ENCODE measurements at regions of chr1 and their contacts with region 1.

Region 1: GRCh38 chr1:65958561-65959350 is 166.1 kb downstream of the PDE4B start:
- DNase-seq: no peak
- ATAC-seq: peak in 3 of 8 donors; percentile 29 to 46 (median 45)
- H3K4me3 ChIP-seq: no peak overlapping the region
- H3K27ac ChIP-seq: no peak overlapping the region
- H3K4me1 ChIP-seq: peaks cover 0 to 8% (median 0%) of the 10 kb centered on the region in 9 donors
- H3K27me3 ChIP-seq: peaks cover 0 to 5% (median 0%) of the 10 kb centered on the region in 7 donors
- CTCF ChIP-seq: peak; percentile 62 to 89 (median 72)

Region 2: DNA sequence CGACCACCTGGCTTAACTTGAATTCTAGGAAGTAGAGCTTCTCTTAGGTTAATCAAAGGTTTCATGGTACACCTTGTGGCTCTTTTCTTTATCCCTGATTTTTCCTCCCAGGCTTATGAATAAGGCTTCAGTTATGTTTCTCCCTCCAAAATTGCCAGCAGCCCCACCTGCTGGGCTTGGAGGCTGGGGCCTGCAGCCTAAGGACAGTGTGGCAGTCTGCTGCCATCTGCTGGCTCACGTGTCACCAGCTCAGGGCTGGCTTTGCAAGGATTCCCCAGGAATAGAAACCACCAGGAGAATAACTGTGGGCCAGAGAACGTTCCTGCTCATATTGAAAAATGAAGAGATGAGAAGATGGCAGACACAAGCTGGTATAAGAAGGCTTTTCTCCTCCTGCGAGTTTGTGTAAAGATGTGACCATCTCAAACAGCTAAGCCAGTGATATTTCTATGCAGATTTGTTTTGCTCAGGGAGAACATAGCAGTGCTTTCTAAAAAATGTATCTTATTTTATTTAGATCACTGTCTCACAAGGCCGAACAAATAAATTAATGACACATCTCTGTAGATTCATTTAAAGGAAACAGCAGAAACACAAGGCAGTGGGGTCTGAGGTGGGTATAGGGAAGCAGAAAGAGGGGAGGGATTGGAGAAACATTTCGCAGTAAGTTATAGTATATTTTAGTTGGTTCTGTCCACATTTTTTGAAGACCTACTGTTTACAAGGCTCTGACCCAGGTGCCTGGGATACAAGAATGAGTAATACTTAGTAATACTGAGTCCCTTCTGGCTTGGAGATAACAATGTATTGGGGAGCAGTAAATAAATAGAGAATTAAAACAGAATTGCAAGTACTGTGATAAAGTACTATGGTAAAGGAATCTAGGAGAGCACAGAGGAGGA is 284.1 kb after region 1 on chr1:
- intact Hi-C with region 1: loop called (anchors 1 to 5 kb)
- DNase-seq: peak; percentile 77 to 78
- ATAC-seq: peak; percentile 92 to 99 (median 96)
- H3K4me3 ChIP-seq: no peak overlapping the region
- H3K27ac ChIP-seq: no peak overlapping the region
- H3K4me1 ChIP-seq: peaks cover 0 to 14% (median 0%) of the 10 kb centered on the region in 9 donors
- H3K27me3 ChIP-seq: peaks cover 0 to 4% (median 0%) of the 10 kb centered on the region in 7 donors
- CTCF ChIP-seq: peak; percentile 91 to 100 (median 97)

Region 3: DNA sequence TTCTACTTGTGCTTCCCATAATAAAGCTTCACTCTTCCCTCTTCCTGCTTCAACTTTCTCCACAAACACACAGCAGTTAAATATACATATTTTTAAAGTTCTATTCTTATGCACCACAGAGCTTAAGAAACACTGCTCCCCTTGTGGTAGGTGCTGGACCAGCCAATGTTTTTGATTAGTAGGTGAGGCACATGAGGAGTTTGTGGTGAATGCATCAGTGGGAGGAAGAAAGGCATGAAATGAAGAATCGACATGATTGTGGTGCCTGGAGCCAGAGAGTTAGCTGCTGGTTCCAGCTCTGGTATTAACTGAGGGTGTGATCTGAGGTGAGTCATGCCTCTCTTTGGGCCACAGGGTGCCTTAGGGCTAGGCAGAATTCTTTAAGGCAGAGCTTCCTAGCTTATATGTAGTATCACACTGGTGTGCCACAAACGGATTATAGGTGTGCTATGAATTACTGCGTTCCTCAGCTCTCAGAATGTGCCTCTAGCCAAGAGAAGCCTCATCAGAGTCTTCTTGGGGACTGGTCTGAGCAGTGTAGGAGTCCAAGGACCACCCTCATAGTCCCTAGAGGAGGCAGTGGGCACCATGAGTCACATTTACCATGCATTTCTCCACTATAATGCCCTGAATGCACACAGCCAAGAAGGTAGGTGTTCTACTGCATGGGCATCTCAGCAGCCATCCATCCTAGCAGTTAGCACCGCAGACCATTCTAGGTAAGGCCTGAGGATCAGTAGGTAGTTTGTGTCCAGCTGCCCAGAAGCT is 477.8 kb after region 1 on chr1:
- intact Hi-C with region 1: loop called in 1 of 10 experiments (anchors 5 kb)
- DNase-seq: no peak
- ATAC-seq: no peak
- H3K4me3 ChIP-seq: no peak overlapping the region
- H3K27ac ChIP-seq: no peak overlapping the region
- H3K4me1 ChIP-seq: peaks cover 0 to 28% (median 0%) of the 10 kb centered on the region in 9 donors
- H3K27me3 ChIP-seq: no peaks in the 10 kb centered on the region
- CTCF ChIP-seq: peak in 6 of 9 donors; percentile 13 to 35 (median 22)

Region 4: DNA sequence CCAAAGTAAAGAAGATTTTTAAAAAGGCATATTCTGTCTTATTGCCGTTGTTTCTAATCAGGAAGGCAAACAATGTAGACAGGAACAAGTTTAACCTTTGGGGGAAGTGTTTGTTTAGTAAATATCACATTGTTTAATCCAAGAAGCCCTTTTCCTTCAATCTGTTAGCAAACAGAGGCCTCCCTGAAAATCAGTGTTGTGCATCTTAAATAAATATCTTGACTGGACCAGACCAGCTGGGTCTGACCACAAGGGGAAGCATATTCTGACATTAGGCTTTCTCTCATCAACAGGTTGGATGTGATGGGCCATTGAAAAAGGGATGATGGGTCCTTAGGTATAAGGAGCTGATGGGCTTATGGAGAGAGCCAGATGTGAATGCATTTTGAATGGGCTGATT is 493.4 kb after region 1 on chr1:
- intact Hi-C with region 1: loop called in 8 of 10 experiments (anchors 2 to 5 kb)
- DNase-seq: no peak
- ATAC-seq: no peak
- H3K4me3 ChIP-seq: no peak overlapping the region
- H3K27ac ChIP-seq: peak overlapping the region in 1 of 10 donors; percentile 59
- H3K4me1 ChIP-seq: peaks cover 3 to 25% (median 15%) of the 10 kb centered on the region in 9 donors
- H3K27me3 ChIP-seq: no peaks in the 10 kb centered on the region
- CTCF ChIP-seq: peak in 3 of 9 donors; percentile 7 to 22 (median 17)

Region 5: DNA sequence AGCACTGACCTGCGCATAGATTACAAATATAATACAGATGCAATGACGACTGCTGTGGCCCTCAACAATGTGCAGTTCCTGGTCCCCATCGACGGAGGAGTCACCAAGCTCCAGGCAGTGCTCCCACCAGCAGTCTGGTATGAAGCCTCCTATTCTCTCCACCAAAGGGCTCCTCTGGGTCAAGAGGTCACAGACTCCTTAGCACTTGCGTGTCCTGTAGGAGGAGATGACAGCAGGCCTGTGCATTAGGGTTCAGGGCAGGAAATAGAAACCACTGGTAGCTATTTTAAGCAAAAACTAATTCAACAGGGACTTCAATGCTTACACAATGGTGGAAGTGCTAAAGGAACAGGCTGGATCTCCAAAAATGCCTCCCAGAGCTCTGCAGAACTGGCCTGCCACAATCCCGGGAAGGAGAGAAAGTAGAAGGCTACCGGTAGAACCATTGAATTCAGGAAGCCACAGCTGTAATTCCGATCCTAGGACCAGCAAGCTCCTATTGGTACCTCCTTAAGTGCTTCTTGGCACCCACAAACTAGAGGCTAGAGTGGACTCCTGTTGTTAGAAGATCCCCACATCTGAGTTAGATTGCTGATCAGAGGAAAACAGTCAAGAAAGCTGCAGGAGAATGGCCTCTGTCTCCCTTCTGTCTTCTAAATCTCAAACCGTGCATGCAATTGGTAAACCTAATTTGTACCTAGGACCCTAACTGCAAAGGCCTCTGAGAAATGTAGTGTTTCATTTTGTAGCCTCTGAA is 780.8 kb after region 1 on chr1:
- intact Hi-C with region 1: loop called in 1 of 10 experiments (anchors 10 kb)
- DNase-seq: peak in 1 of 2 donors; percentile 14
- ATAC-seq: peak in 7 of 8 donors; percentile 30 to 79 (median 68)
- H3K4me3 ChIP-seq: no peak overlapping the region
- H3K27ac ChIP-seq: peak overlapping the region in 4 of 10 donors; percentile 22 to 59 (median 38)
- H3K4me1 ChIP-seq: peaks cover 0 to 25% (median 14%) of the 10 kb centered on the region in 9 donors
- H3K27me3 ChIP-seq: no peaks in the 10 kb centered on the region
- CTCF ChIP-seq: no peak

Measured in heart right ventricle (tissue), 16 donors.